ENCODE measurements at regions of chr13 and their contacts with region 1.

Region 1: DNA sequence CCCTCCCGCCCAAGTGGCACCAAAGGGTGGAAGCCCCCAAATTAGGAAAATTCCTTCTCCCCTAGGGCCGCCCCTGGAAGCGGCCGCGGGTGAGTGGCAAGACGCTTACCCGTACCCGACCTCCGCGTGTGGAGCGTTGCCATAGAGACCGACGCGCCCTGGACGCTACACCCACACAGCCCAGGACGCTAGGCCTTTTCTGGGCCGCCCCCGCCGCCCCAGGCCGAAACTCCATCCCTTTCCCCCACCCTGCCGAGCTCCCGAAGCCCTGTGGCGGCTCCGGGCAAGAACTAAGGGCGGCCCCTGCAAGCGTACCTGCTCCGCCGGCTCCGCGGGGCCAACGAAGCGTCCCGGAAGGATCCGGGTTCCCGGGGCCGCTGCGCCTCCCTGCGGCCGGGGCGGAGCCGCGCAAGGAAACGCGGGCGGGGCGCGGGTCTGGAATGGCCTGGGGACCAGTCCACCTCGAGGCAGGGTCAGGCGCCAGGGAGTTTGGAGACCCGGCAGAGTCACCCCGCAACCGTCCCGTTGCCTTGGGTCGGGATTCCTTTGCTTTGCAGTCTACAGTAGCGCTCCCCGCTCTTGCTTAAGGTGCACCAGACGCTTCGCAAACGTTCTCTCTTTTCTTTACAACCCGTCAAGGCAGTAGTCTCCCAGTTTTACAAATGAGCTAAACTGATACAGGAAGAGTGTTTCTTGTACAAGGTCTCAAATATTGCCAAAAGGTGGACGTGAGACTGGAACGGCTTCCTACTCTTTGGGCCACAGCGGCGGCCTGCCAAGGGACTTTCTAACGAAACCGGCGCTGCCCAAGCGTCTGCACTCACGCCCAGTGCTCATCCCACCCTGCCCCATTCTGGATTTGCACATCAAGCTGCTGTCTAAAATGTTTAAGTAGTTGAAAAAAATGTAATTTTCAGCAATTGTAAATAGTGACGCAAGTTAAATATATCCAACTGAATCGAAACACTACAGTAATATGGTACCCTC is at the start of gene NEK5:
- DNase-seq: peak; percentile 57
- H3K4me3 ChIP-seq: peak within 1 kb of the TSS; percentile 54 to 79 (median 62)
- H3K27ac ChIP-seq: no peak within 1 kb of the TSS
- H3K4me1 ChIP-seq: peaks cover 21% of the 10 kb centered on the region
- H3K27me3 ChIP-seq: no peaks in the 10 kb centered on the region
- CTCF ChIP-seq: peak; percentile 26 to 87
- total RNA-seq, gene NEK5: 0.26 to 0.33 TPM

Region 2: GRCh38 chr13:51814825-51815650 is 314.0 kb before region 1 on chr13:
- CTCF ChIA-PET with region 1: interaction called, 5 read pairs
- dilution Hi-C with region 1: no loop called
- in situ Hi-C with region 1: no loop called
- intact Hi-C with region 1: loop called (anchors 1 kb)
- DNase-seq: peak; percentile 67
- H3K4me3 ChIP-seq: peak overlapping the region in 2 of 3 experiments; percentile 22 to 34
- H3K27ac ChIP-seq: no peak overlapping the region
- H3K4me1 ChIP-seq: peaks cover 4% of the 10 kb centered on the region
- H3K27me3 ChIP-seq: no peaks in the 10 kb centered on the region
- CTCF ChIP-seq: peak; percentile 85 to 86

Region 3: GRCh38 chr13:51895906-51896888 is 232.8 kb before region 1 on chr13:
- CTCF ChIA-PET with region 1: no interaction called
- dilution Hi-C with region 1: no loop called
- in situ Hi-C with region 1: loop called in 1 of 2 experiments (anchors 25 kb)
- intact Hi-C with region 1: loop called (anchors 1 kb)
- DNase-seq: peak; percentile 38
- H3K4me3 ChIP-seq: no peak overlapping the region
- H3K27ac ChIP-seq: no peak overlapping the region
- H3K4me1 ChIP-seq: no peaks in the 10 kb centered on the region
- H3K27me3 ChIP-seq: peaks cover 2% of the 10 kb centered on the region
- CTCF ChIP-seq: peak; percentile 85 to 91

Region 4: DNA sequence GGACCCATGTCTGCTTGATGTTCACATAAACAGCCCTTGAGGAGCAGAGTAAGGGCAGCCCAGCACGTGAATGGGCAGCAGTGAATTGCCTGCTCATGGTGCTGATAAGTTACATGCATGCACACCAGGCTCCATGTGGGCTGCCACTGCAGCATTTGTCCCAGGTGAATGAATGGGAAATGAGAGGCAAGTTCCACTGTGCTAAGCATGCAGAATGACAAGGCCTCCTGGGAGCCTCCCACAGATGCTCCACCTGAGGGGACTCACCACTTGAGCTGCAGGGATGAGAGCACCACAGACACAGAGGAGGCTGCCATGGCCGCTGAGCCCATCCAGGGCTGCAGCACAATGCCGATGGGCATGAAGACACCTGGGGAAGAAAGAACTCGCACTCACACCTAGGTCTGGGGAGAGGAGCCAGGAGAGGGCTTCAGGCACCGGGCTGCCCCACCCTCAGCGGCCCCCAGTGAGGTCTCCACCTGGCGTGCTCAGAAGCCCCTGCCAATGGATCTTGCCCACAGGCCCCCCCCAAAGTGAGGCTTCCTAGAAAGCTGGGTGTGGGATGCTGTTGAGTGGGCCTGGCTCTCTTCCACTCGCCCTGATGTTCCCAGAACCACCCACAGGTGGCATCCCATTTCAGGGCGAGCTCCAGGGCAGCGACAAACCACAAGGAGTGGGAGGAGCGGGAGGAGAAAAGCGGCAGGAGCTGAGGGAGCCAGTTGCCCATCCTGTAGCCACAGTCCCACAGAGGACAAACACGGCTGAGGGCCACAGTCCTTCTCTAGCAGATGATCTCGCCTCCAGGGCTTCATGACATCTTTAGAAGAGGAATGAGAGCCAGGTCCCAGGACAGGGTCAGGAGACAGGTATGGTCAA is 193.4 kb before region 1 on chr13:
- CTCF ChIA-PET with region 1: no interaction called
- dilution Hi-C with region 1: no loop called
- in situ Hi-C with region 1: no loop called
- intact Hi-C with region 1: loop called (anchors 2 kb)
- DNase-seq: peak; percentile 19
- H3K4me3 ChIP-seq: no peak overlapping the region
- H3K27ac ChIP-seq: no peak overlapping the region
- H3K4me1 ChIP-seq: no peaks in the 10 kb centered on the region
- H3K27me3 ChIP-seq: no peaks in the 10 kb centered on the region
- CTCF ChIP-seq: peak; percentile 37 to 62

Region 5: DNA sequence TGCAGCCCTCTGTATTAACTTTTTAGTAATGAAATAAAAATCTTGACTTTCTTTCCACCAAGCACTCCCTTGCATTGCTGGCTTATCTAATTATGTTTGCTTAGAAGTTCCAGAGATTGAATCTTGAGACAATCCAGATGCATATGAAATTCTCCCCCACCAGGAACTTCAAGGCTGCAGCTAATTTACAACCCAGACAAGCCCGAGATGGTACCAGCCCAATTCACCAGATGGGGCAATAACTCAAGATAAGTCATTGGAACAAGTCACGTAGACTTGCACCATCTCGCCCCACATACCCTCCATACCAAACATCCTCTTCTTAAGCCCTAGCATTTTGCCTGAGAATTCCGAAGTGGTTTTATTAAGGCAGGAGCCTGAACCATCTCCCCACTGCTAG is 75.5 kb before region 1 on chr13:
- CTCF ChIA-PET with region 1: no interaction called
- dilution Hi-C with region 1: no loop called
- in situ Hi-C with region 1: no loop called
- intact Hi-C with region 1: loop called (anchors 2 kb)
- DNase-seq: no peak
- H3K4me3 ChIP-seq: no peak overlapping the region
- H3K27ac ChIP-seq: no peak overlapping the region
- H3K4me1 ChIP-seq: no peaks in the 10 kb centered on the region
- H3K27me3 ChIP-seq: peaks cover 3% of the 10 kb centered on the region
- CTCF ChIP-seq: no peak

Measured in mammary epithelial cell (primary cell).